GM10248 (cell line): ENCODE measurements at regions of chr12 and their contacts with region 1.

Region 1: DNA sequence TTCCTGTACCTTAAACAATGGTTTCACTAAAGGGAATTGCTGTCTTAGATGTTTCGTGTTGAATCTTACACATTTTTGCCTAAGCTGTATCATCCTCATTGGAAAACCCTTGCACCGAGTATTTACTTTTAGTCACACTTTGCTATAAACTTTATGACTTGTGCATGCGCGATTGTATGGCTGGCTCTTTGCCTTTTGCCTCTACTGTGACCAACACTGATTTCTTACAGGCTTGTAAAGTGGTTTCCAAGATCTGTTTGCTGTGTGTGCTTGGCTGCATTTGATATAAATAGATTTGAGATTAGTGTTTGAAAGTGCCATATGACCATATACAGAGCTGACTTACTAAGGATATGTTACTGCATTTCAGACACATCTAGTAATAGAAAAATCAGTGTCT is 40.5 kb downstream of the RASSF3 start:
- DNase-seq: no peak
- CTCF ChIP-seq: no peak

Region 2: DNA sequence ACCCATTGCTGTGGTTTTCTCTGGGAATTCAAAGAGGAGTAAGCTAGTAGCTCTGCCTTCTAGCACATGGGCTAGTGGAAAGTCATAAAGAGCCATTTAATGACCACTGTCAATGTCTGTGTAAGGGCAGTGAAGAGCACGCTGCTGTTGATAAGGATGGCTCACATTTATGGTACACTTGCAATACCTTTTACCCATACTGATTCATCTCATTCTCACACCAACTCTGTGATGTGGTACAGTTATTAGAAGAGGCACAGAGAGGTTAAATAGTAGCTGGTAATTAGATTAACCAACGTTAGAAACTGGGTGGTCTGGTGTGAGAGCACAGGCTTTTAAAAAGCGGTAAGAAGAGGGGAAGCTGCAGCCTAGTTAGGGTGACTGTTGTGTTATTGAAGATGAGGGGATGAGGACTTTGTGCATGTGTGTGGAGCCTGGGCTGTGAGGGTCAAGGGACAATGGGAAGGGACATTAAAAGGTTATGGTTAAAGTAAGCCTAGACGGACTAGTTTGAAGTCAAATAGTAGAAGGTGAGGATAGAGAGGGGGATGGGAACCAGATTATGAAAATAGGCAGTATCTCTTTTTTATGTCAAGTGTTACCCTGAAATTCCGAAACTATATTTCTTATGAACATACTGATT is 15.3 kb before region 1 on chr12:
- CTCF ChIA-PET with region 1: interaction called, 16 read pairs
- POLR2A ChIA-PET with region 1: no interaction called
- DNase-seq: no peak
- CTCF ChIP-seq: no peak